GM12878 (cell line): ENCODE measurements at regions of chr18 and their contacts with region 1.

Region 1: GRCh38 chr18:3771121-3771971 is 321.4 kb downstream of the TGIF1 start:
- DNase-seq: no peak
- ATAC-seq: peak; percentile 99
- H3K4me3 ChIP-seq: no peak overlapping the region
- H3K27ac ChIP-seq: no peak overlapping the region
- H3K4me1 ChIP-seq: no peaks in the 10 kb centered on the region
- H3K27me3 ChIP-seq: no peaks in the 10 kb centered on the region
- CTCF ChIP-seq: peak; percentile 79 to 87 (median 87)
- EP300 ChIP-seq: no peak
- POLR2A ChIP-seq: no peak
- RAD21 ChIP-seq: peak; percentile 72

Region 2: GRCh38 chr18:2847365-2848246 is 923.7 kb before region 1 on chr18:
- CTCF ChIA-PET with region 1: no interaction called
- POLR2A ChIA-PET with region 1: no interaction called
- RAD21 ChIA-PET with region 1: no interaction called
- SMC1A ChIA-PET with region 1: no interaction called
- in situ Hi-C with region 1: no loop called
- intact Hi-C with region 1: no loop called
- DNase-seq: no peak
- ATAC-seq: peak; percentile 64
- H3K4me3 ChIP-seq: peak overlapping the region; percentile 59
- H3K27ac ChIP-seq: no peak overlapping the region
- H3K4me1 ChIP-seq: no peaks in the 10 kb centered on the region
- H3K27me3 ChIP-seq: peaks cover 4 to 14% of the 10 kb centered on the region in 2 experiments
- CTCF ChIP-seq: no peak
- EP300 ChIP-seq: no peak
- POLR2A ChIP-seq: no peak
- RAD21 ChIP-seq: no peak

Region 3: DNA sequence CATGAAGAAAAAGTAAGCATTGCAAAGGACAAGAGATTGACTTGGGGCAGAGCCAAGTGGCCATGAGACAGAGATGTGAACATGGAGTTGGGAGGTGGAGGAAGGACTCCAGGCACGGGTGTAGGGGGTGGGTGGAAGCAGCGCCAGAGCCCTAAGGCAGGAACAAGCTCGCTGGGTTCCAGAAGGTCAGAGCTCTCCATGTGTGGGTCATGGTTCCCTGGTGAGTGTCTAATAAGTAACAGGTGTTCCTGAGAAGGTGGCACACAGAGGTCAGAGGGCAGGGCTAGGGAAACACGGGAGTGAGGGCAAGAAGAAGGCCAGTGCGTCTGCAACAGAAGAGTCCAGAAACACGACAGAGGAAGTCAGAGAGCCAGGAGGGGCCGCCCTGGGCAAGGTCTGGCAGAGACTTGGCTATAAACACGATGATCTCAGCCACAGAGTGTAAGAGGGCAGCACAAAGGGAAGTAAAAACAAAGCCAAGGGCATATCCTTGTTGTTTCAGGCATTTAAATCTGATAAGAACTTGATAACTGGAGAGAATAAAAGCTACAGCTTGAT is 60.6 kb before region 1 on chr18:
- CTCF ChIA-PET with region 1: interaction called, 13 read pairs
- POLR2A ChIA-PET with region 1: no interaction called
- RAD21 ChIA-PET with region 1: interaction called, 10 read pairs
- SMC1A ChIA-PET with region 1: interaction called, 3 read pairs
- in situ Hi-C with region 1: no loop called
- intact Hi-C with region 1: loop called (anchors 10 kb)
- DNase-seq: no peak
- ATAC-seq: peak; percentile 34; the same call in 2 of the 3 replicates
- H3K4me3 ChIP-seq: no peak overlapping the region
- H3K27ac ChIP-seq: no peak overlapping the region
- H3K4me1 ChIP-seq: no peaks in the 10 kb centered on the region
- H3K27me3 ChIP-seq: no peaks in the 10 kb centered on the region
- CTCF ChIP-seq: no peak
- EP300 ChIP-seq: no peak
- POLR2A ChIP-seq: no peak
- RAD21 ChIP-seq: no peak

Region 4: GRCh38 chr18:3789525-3789924 is 18.2 kb after region 1 on chr18:
- CTCF ChIA-PET with region 1: interaction called, 18 read pairs
- POLR2A ChIA-PET with region 1: interaction called, 3 read pairs
- RAD21 ChIA-PET with region 1: interaction called, 9 read pairs
- SMC1A ChIA-PET with region 1: interaction called, 11 read pairs
- in situ Hi-C with region 1: no loop called
- intact Hi-C with region 1: no loop called
- DNase-seq: no peak
- ATAC-seq: no peak
- H3K4me3 ChIP-seq: no peak overlapping the region
- H3K27ac ChIP-seq: no peak overlapping the region
- H3K4me1 ChIP-seq: no peaks in the 10 kb centered on the region
- H3K27me3 ChIP-seq: no peaks in the 10 kb centered on the region
- CTCF ChIP-seq: no peak
- EP300 ChIP-seq: no peak
- POLR2A ChIP-seq: no peak
- RAD21 ChIP-seq: no peak

Region 5: GRCh38 chr18:3845161-3845560 is 73.8 kb after region 1 on chr18:
- CTCF ChIA-PET with region 1: interaction called, 11 read pairs
- POLR2A ChIA-PET with region 1: no interaction called
- RAD21 ChIA-PET with region 1: interaction called, 15 read pairs
- SMC1A ChIA-PET with region 1: interaction called, 12 read pairs
- in situ Hi-C with region 1: no loop called
- intact Hi-C with region 1: no loop called
- DNase-seq: no peak
- ATAC-seq: no peak
- H3K4me3 ChIP-seq: no peak overlapping the region
- H3K27ac ChIP-seq: no peak overlapping the region
- H3K4me1 ChIP-seq: no peaks in the 10 kb centered on the region
- H3K27me3 ChIP-seq: no peaks in the 10 kb centered on the region
- CTCF ChIP-seq: no peak
- EP300 ChIP-seq: no peak
- POLR2A ChIP-seq: no peak
- RAD21 ChIP-seq: no peak

Region 6: DNA sequence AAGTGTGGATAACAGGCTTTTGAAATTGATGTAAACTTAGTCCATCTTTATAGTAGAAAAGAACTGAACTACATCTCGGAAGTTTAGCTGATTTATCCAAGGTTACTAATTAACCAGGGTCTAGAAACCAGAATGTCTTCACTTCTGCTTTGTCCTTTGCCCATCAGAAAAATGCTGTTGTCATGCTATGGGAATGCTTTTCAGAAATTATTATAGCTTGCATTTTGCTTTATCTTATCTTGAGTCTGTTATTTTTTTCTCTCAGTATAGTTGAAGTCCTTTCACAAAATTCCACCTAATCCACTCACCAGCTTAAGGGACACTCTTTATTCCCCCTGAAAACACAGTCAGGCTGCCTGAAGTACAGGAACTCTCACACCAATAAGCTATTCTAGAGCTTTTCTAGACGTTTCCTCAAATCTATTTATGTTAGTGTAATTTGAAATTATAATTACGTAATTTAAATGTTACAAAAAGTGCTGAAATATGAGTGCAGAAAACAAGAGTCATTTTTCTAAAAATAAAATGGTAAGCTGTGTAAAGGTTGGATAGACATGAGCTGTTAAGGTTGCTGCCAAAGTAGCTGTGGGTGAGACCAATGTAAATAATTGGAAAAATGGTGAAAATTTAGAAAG is 134.9 kb after region 1 on chr18:
- CTCF ChIA-PET with region 1: interaction called, 14 read pairs
- POLR2A ChIA-PET with region 1: no interaction called
- RAD21 ChIA-PET with region 1: interaction called, 11 read pairs
- SMC1A ChIA-PET with region 1: no interaction called
- in situ Hi-C with region 1: no loop called
- intact Hi-C with region 1: no loop called
- DNase-seq: peak; percentile 11
- ATAC-seq: peak; percentile 82
- H3K4me3 ChIP-seq: no peak overlapping the region
- H3K27ac ChIP-seq: no peak overlapping the region
- H3K4me1 ChIP-seq: no peaks in the 10 kb centered on the region
- H3K27me3 ChIP-seq: no peaks in the 10 kb centered on the region
- CTCF ChIP-seq: no peak
- EP300 ChIP-seq: no peak; a peak in 1 of 4 replicates
- POLR2A ChIP-seq: no peak
- RAD21 ChIP-seq: no peak

Region 7: GRCh38 chr18:3995476-3996102 is 224.2 kb after region 1 on chr18:
- CTCF ChIA-PET with region 1: interaction called, 111 read pairs
- POLR2A ChIA-PET with region 1: interaction called, 3 read pairs
- RAD21 ChIA-PET with region 1: interaction called, 78 read pairs
- SMC1A ChIA-PET with region 1: interaction called, 59 read pairs
- in situ Hi-C with region 1: no loop called
- intact Hi-C with region 1: loop called (anchors 1 kb)
- DNase-seq: peak; percentile 38
- ATAC-seq: peak; percentile 85
- H3K4me3 ChIP-seq: no peak overlapping the region
- H3K27ac ChIP-seq: no peak overlapping the region
- H3K4me1 ChIP-seq: no peaks in the 10 kb centered on the region
- H3K27me3 ChIP-seq: no peaks in the 10 kb centered on the region
- CTCF ChIP-seq: peak; percentile 75 to 76 (median 75); a peak in 5 of 6 replicates
- EP300 ChIP-seq: no peak
- POLR2A ChIP-seq: no peak
- RAD21 ChIP-seq: peak; percentile 61